Mammary epithelial cell (primary cell): ENCODE measurements at regions of chr17 and their contacts with region 1.

Region 1: DNA sequence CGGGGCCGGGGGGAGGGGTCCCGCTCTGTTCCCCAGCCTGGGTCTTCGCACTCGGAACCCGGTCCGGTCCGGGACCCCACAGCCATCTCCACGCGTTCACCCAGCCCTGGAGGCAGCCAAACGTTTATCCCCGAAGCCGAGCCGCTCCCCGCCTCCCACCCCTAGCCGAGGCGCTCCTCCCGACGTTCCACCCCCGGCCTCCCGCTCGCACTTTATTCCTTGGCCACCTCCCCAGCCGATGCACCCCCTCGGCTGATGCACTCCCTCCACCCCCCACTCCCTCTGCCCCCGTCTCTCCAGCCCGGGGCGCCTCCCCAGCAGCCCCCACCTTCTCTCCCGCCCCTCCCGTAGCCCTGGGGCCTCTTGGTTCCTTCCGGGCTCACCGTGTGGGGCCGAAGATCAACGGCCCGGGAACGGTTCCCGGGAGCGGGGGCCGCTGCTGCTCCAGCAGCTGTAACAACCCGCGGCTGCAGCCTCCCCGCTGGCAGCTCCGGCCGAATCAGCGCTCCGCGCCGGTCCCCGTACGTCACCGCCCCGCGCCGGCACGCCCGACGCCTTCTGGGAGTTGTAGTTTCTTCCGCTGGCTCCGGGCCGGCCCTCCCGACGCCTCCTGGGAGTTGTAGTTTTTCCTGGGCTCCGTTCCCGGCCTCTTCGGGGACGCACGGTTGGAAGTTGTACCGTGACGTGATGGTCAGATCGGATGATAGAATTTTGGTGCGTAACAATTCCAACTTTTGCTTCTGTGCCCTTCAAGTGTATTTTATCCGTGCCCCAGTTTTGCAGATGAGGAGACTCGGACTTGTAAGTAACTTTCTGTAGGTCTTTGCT is at the starts of genes LRRC3C and ORMDL3:
- DNase-seq: peak; percentile 89
- H3K4me3 ChIP-seq: peak within 1 kb of the TSS; percentile 74 to 85 (median 84)
- H3K27ac ChIP-seq: peak within 1 kb of the TSS; percentile 49
- H3K4me1 ChIP-seq: peaks cover 25% of the 10 kb centered on the region
- H3K27me3 ChIP-seq: no peaks in the 10 kb centered on the region
- CTCF ChIP-seq: no peak
- total RNA-seq, gene LRRC3C: not detected
- total RNA-seq, gene ORMDL3: 36.2 to 53.3 TPM

Region 2: DNA sequence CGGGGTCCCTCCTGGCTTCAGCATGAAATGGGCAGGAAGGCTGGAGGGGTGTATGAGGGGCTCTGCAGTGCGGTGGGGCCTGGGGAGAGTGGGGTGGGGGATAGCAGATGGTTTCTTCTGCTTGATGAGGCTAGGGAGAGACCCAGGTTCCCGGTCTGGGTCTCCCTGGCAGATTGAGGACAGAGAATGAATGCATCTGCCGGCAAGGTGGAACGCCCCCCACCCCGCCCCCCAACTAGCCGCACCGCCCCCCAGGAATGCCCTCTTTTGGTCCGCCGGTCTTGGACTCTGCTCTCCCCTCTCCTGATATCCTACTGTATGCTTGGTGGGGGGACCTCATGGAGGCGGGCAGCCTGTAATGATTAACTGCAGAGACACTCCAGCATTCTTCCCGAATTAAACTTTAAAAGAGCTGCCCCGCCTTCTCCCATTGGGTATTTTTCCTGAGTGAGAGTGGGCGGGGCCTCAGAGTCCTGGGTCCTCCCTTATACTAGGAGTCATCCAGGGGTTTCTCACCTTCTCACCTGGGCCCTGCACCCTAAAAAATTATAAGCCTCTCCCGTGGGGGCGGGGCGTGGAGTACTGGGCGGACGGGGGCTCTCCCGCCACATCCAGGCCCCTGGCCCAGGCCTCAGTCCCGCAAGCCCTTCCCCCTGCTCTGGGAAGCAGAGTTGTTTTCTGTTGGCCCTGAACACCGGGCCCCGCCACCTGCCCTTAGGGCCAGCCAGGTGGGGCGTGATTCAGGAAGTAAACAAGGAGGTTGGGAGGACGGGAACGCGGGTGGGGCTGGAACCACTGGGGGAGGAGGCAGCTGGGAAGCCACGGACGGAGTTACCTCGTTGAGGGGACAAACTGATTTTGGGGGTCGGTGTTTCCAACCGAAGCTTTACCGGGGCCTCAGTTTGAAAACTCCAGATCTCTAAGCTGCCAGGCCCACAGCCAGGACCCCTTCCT is 188.1 kb before region 1 on chr17:
- CTCF ChIA-PET with region 1: no interaction called
- dilution Hi-C with region 1: no loop called
- in situ Hi-C with region 1: no loop called
- intact Hi-C with region 1: loop called (anchors 5 kb)
- DNase-seq: peak; percentile 87
- H3K4me3 ChIP-seq: peak overlapping the region; percentile 67 to 85 (median 75)
- H3K27ac ChIP-seq: peak overlapping the region; percentile 91
- H3K4me1 ChIP-seq: peaks cover 29% of the 10 kb centered on the region
- H3K27me3 ChIP-seq: no peaks in the 10 kb centered on the region
- CTCF ChIP-seq: no peak

Region 3: DNA sequence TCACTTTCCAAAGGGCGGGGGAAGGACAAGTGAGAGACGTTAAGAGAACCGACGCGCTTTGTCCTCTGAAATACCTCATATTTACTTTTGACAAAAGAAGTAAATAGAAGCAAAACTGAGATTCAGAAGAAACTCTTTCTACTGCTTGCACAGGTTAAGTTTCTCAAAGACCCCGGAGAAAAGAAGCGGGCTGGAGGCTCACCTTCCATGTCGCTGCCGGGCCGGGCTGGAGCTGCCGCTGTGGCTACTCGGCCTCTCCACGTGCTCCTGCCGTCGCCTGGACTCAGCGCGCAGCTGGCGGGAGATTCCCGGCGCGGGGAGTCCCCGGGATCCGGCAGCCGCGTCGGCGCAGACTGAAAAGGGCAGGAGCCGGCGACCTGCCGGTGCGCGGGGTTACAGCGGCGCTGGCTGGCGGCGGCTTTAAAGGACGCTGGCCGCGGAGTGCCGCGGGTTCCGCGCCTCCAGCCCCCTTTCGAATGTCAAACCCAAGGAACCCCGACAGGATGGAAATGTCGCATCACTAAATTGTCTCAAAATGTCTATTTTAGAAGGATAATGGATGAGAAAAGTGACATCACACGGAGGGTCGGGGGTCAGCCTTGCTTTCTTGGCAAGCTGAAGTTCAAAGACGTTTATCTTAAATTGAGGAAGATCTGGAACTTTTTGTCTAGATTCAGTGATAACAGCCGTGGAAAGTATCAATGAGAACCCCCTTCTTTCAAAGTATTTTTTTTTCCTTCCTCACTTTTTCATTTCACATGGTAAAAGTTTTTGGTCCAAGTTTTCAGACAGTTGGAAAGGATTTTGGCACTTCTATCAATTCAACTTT is 63.2 kb before region 1 on chr17 and contains the start of gene IKZF3:
- CTCF ChIA-PET with region 1: no interaction called
- dilution Hi-C with region 1: loop called (anchors 5 kb)
- in situ Hi-C with region 1: no loop called
- intact Hi-C with region 1: no loop called
- DNase-seq: peak; percentile 68
- H3K4me3 ChIP-seq: no peak within 1 kb of the TSS
- H3K27ac ChIP-seq: no peak within 1 kb of the TSS
- H3K4me1 ChIP-seq: peaks cover 6% of the 10 kb centered on the region
- H3K27me3 ChIP-seq: peaks cover 47% of the 10 kb centered on the region
- CTCF ChIP-seq: peak in 1 of 2 donors; percentile 43
- total RNA-seq, gene IKZF3: 0.02 TPM in 1 of 2 donors, not detected in the other

Region 4: GRCh38 chr17:39903158-39903884 is 24.0 kb before region 1 on chr17:
- CTCF ChIA-PET with region 1: no interaction called
- dilution Hi-C with region 1: no loop called
- in situ Hi-C with region 1: no loop called
- intact Hi-C with region 1: no loop called
- DNase-seq: no peak
- H3K4me3 ChIP-seq: no peak overlapping the region
- H3K27ac ChIP-seq: no peak overlapping the region
- H3K4me1 ChIP-seq: no peaks in the 10 kb centered on the region
- H3K27me3 ChIP-seq: no peaks in the 10 kb centered on the region
- CTCF ChIP-seq: no peak

Region 5: DNA sequence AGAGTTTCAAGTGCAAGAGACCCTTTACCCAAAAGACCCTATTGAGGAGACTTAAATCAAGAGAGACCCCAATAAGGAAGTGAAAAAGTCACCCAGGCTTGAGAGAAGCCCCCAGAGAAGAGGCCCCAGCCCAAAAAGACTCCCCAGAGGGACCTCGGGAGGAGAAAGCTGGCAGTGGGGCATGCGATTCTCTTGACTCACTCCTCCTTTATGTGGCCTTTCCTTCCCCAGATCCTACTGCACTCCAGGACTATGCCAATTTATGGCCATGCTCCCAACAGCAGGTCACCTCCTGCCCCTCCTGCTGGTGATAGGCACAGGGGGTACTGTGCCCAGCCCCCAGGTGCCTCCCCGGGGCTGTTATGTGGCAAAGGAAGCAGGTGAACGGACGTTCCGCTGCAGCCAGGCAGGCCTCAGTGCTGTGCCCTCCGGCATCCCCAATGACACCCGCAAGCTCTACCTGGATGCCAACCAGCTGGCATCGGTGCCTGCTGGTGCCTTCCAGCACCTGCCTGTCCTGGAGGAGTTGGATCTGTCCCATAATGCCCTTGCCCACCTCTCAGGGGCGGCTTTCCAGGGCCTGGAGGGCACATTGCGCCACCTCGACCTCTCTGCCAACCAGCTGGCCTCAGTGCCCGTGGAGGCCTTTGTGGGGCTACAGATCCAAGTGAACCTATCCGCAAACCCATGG is 16.5 kb after region 1 on chr17:
- CTCF ChIA-PET with region 1: no interaction called
- dilution Hi-C with region 1: no loop called
- in situ Hi-C with region 1: no loop called
- intact Hi-C with region 1: loop called (anchors 1 kb)
- DNase-seq: no peak
- H3K4me3 ChIP-seq: no peak overlapping the region
- H3K27ac ChIP-seq: no peak overlapping the region
- H3K4me1 ChIP-seq: peaks cover 9% of the 10 kb centered on the region
- H3K27me3 ChIP-seq: no peaks in the 10 kb centered on the region
- CTCF ChIP-seq: no peak

Region 6: GRCh38 chr17:40032322-40033320 is 105.3 kb after region 1 on chr17:
- CTCF ChIA-PET with region 1: no interaction called
- dilution Hi-C with region 1: loop called (anchors 5 kb)
- in situ Hi-C with region 1: no loop called
- intact Hi-C with region 1: no loop called
- DNase-seq: no peak
- H3K4me3 ChIP-seq: no peak overlapping the region
- H3K27ac ChIP-seq: peak overlapping the region; percentile 0
- H3K4me1 ChIP-seq: peaks cover 21% of the 10 kb centered on the region
- H3K27me3 ChIP-seq: no peaks in the 10 kb centered on the region
- CTCF ChIP-seq: no peak

Region 7: DNA sequence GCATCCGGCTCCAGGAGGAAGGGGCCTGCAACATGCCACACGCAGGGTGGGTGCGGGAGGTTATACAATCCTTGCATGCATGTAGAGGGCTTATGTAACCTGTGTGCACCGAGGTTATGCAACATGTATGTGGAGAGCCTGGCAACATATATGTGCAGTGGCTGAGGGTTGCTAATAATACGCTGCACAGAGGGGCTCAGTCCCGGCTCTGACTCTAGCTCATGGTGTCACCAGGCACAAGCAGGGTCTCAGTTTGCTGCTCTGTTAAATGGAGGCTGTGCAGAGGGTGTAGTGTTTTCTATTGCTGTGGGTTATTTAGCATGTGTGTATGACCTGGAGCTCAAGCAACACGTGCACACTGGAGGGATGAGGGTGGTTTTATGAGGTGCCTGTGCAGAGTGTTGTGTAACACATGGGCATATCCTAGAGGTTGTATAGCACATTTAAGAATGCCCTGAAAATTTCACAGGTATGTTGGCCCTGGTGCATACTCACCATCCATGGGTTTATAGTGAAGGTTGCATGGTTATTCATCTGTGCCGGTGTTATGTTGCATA is 148.7 kb after region 1 on chr17:
- CTCF ChIA-PET with region 1: no interaction called
- dilution Hi-C with region 1: no loop called
- in situ Hi-C with region 1: no loop called
- intact Hi-C with region 1: no loop called
- DNase-seq: no peak
- H3K4me3 ChIP-seq: no peak overlapping the region
- H3K27ac ChIP-seq: no peak overlapping the region
- H3K4me1 ChIP-seq: peaks cover 27% of the 10 kb centered on the region
- H3K27me3 ChIP-seq: no peaks in the 10 kb centered on the region
- CTCF ChIP-seq: no peak